Naive thymus-derived CD8-positive, alpha-beta T cell (primary cell): ENCODE measurements at regions of chr14 and their contacts with region 1.

Region 1: DNA sequence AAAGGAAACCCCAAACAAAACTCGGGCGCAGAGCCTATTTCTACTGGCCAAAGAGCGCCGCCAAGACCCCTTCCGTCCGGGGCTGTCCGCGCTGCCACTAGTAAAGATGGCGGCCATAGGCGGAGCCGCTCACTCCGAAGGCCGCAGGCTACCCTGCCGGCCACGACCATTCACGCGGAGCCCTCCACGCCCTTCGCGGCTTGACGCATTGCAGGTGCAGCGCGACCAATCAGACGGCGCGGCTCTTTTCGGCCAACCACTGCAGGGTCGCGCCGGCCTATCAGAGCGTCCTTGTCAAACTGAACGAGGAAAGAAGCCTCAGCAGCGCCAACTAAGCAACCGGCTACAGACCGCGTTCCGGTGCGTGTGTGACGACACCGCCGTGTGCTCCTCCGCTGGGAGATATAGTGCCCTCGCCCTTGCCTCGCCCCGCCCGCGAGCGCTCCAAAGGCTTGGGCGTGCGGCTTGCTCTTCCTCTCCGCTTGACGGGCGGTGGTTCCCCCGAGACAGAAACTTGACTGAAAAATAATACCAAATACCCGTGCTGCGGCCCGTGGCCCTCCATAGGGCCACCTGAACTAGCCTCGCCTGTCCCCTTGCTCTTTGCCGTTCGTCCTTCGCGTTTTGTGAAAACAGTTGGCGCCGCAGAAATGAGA is 13.6 kb upstream of the CALM1 start:
- DNase-seq: peak; percentile 91 to 99 (median 96)
- ATAC-seq: peak; percentile 73 to 76
- H3K4me3 Mint-ChIP-seq: no peak overlapping the region
- H3K27ac Mint-ChIP-seq: no peak overlapping the region
- H3K4me1 Mint-ChIP-seq: peaks cover 0 to 29% (median 19%) of the 10 kb centered on the region in 4 donors
- H3K27me3 Mint-ChIP-seq: no peaks in the 10 kb centered on the region

Region 2: GRCh38 chr14:90331497-90332435 is 51.4 kb before region 1 on chr14 and contains the start of gene NRDE2:
- POLR2A ChIA-PET with region 1: interaction called, 38 read pairs
- DNase-seq: peak; percentile 81 to 97 (median 86)
- ATAC-seq: peak; percentile 95 to 96
- H3K4me3 Mint-ChIP-seq: peak within 1 kb of the TSS; percentile 89 to 96 (median 94)
- H3K27ac Mint-ChIP-seq: peak within 1 kb of the TSS; percentile 93 to 98 (median 96)
- H3K4me1 Mint-ChIP-seq: peaks cover 13 to 37% (median 36%) of the 10 kb centered on the region in 4 donors
- H3K27me3 Mint-ChIP-seq: peaks cover 0 to 16% (median 5%) of the 10 kb centered on the region in 5 donors
- polyA plus RNA-seq, gene NRDE2: 5.5 to 10.2 (median 8.4) TPM

Region 3: DNA sequence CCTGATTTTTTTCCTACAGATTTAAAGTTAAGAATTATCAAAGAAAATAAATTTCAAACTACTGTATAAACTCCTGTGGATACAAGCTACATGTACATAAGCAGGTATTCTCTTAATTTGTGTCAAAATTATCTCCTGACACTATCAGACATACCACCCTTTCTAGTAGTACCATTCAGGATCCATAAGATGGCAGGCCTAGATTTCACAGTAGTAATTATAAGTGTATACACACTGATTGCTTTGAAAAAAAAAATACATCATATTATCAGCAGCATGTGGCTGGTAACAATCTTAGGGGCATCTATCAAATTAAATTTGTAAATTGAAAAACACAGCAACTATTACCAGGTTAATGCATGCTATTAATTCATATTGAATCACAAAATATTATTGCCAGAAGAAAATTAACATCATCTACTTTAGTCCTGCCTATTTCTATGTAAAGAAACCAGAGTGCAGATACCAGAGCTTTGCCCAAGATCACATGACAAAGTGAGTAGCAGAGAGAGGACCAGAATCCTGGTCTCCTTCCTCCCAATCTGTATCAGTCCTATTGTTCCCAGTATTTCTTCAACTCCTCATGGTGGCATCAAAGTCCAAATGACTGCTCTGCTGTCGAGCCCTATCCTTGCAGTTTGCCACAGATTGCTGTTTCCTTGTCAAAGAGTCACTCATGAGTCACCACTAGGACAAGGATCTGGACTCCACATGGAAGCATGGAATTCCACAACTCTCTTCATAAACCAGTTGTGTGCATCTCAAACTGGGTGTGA is 14.1 kb before region 1 on chr14:
- POLR2A ChIA-PET with region 1: interaction called, 12 read pairs
- DNase-seq: peak in 4 of 10 donors; percentile 5 to 55 (median 47)
- ATAC-seq: peak; percentile 98 to 100
- H3K4me3 Mint-ChIP-seq: no peak overlapping the region
- H3K27ac Mint-ChIP-seq: no peak overlapping the region
- H3K4me1 Mint-ChIP-seq: peaks cover 0 to 8% (median 2%) of the 10 kb centered on the region in 4 donors
- H3K27me3 Mint-ChIP-seq: no peaks in the 10 kb centered on the region

Region 4: DNA sequence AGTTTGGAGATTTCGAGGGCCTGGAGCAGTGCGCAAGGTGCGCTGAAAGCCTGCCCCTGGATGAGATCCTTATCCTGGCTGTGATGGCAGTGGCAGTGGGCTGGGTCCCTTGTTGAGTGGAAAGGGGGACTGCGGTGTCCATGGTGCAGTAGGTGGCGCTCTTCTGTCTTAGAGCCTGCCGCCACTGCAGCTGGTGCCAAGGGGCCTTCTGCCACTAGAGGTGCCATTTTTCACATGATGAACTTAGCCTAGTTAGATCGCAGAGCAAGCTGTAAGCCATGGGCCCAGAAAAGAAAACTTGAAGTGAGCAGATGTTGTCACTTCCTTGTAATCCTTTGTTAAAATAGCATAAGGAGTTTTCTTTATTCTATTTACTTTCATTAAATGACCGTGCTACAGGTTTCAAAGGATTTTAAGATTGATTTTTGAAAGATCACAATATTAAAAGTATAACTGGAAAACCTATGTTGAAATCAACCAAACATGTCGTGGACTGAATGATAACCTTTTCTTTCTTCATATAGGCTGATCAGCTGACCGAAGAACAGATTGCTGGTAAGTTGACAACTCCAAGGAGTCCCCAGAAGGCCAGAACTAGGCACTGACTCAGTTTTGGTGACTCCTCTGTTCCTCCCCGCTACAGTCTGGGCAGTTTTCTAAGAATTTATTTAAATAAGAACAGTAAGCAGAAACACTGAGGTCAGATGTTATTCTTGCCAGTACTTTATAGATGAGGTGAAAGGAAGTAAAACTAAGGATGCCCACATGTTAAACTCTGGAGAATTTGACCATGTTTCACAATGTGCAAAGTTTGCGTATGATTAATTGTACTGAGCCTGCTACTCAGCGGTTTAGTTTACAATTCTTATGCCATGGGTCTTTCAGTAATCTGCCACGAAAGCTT is 16.6 kb after region 1 on chr14:
- POLR2A ChIA-PET with region 1: interaction called, 689 read pairs
- DNase-seq: peak; percentile 71 to 93 (median 86)
- ATAC-seq: peak; percentile 47 to 49
- H3K4me3 Mint-ChIP-seq: peak overlapping the region; percentile 90 to 99 (median 98)
- H3K27ac Mint-ChIP-seq: peak overlapping the region; percentile 91 to 100 (median 99)
- H3K4me1 Mint-ChIP-seq: peaks cover 37 to 67% (median 60%) of the 10 kb centered on the region in 4 donors
- H3K27me3 Mint-ChIP-seq: no peaks in the 10 kb centered on the region

Region 5: DNA sequence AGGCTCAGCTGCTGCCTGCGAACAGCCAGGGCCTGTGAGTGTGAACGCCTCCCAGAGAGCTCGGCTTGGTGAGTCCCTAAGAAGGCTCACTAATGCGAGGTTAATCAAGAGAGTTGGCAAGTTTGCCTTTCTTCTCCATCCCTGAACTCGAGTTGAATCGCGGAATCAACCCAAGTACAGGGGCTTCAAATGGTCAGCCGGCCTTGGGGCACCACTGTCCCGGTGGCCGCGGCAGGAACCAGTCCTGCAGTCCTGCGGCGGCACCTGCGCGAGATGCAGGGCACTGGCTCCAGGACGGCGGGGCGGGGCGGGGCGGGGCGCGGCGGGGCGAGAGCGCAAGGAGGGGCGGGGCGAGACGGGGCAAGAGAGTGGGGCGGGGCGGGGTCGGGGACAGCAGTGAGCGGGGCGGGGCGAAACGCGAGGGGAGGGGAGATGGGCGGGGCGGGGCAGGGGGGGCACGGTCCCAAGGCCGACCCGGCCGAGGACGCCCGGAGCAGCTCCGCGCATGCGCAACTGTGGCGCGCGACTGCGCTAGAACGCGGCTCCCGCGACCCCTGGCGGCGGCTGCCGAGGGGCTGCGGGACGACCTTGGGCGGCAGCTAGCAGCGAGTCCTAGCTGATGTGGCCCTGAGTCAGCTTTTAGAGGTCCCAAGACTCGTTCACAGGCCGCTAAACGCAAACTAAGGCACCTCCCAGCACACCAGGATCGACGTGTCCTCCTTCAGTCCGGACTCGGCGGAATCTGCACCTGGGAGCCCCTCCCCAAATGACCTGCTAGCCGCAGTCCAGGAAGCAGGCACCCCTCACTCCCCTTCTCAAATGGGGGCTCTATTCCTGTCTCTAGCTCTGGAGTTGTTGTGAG is 375.1 kb after region 1 on chr14:
- POLR2A ChIA-PET with region 1: interaction called, 26 read pairs
- DNase-seq: peak; percentile 87 to 98 (median 93)
- ATAC-seq: peak; percentile 91 to 93
- H3K4me3 Mint-ChIP-seq: peak overlapping the region; percentile 73 to 89 (median 84)
- H3K27ac Mint-ChIP-seq: peak overlapping the region; percentile 64 to 93 (median 86)
- H3K4me1 Mint-ChIP-seq: peaks cover 6 to 22% (median 17%) of the 10 kb centered on the region in 4 donors
- H3K27me3 Mint-ChIP-seq: peaks cover 0 to 8% (median 3%) of the 10 kb centered on the region in 5 donors